ENCODE measurements at regions of chr2 and their contacts with region 1.

Region 1: DNA sequence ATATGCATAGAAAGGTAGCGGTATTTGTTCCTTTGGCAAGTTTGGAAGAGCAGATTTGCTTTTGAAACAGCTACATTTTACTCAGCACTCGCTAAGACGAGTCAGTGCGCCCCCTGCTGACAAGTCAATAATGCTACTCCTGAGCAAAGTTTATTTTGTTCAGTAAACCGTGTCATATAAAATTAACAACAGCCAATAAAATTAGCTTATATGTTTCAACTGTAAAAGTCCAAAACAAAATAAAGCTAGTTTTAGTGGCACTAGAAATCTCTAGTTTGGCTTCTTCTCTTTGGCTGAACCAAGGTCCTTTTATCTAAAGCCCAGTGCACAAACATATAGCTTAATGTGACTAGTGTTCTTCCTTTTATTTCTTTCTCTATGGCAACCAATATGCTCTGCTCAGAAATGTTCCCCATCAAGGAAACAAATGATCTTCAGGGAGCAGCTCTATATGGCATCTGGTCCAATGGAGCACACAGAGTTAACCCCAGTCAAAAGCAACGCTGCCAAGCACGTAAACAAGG is 4.2 kb upstream of the POU3F3 start:
- DNase-seq: peak; percentile 88
- ATAC-seq: peak; percentile 34
- H3K4me3 Mint-ChIP-seq: no peak overlapping the region
- H3K27ac Mint-ChIP-seq: no peak overlapping the region
- H3K4me1 Mint-ChIP-seq: peaks cover 30% of the 10 kb centered on the region
- H3K27me3 Mint-ChIP-seq: peaks cover 83% of the 10 kb centered on the region

Region 2: GRCh38 chr2:104434318-104434797 is 415.3 kb before region 1 on chr2:
- CTCF ChIA-PET with region 1: no interaction called
- POLR2A ChIA-PET with region 1: no interaction called
- intact Hi-C with region 1: loop called in 1 of 2 experiments (anchors 10 kb)
- DNase-seq: peak; percentile 37
- ATAC-seq: peak; percentile 85
- H3K4me3 Mint-ChIP-seq: peak overlapping the region; percentile 16
- H3K27ac Mint-ChIP-seq: no peak overlapping the region
- H3K4me1 Mint-ChIP-seq: peaks cover 7% of the 10 kb centered on the region
- H3K27me3 Mint-ChIP-seq: peaks cover 26% of the 10 kb centered on the region

Region 3: GRCh38 chr2:104447831-104448434 is 401.7 kb before region 1 on chr2:
- CTCF ChIA-PET with region 1: no interaction called
- POLR2A ChIA-PET with region 1: no interaction called
- intact Hi-C with region 1: loop called in 1 of 2 experiments (anchors 10 kb)
- DNase-seq: no peak
- ATAC-seq: no peak
- H3K4me3 Mint-ChIP-seq: no peak overlapping the region
- H3K27ac Mint-ChIP-seq: no peak overlapping the region
- H3K4me1 Mint-ChIP-seq: peaks cover 3% of the 10 kb centered on the region
- H3K27me3 Mint-ChIP-seq: no peaks in the 10 kb centered on the region

Region 4: GRCh38 chr2:104862058-104862941 is 12.6 kb after region 1 on chr2:
- CTCF ChIA-PET with region 1: interaction called, 22 read pairs
- POLR2A ChIA-PET with region 1: no interaction called
- intact Hi-C with region 1: loop called in 1 of 2 experiments (anchors 2 kb)
- DNase-seq: no peak
- ATAC-seq: no peak
- H3K4me3 Mint-ChIP-seq: peak overlapping the region; percentile 10
- H3K27ac Mint-ChIP-seq: no peak overlapping the region
- H3K4me1 Mint-ChIP-seq: peaks cover 9% of the 10 kb centered on the region
- H3K27me3 Mint-ChIP-seq: peaks cover 79% of the 10 kb centered on the region

Region 5: GRCh38 chr2:104872866-104873688 is 23.4 kb after region 1 on chr2:
- CTCF ChIA-PET with region 1: interaction called, 20 read pairs
- POLR2A ChIA-PET with region 1: no interaction called
- intact Hi-C with region 1: loop called (anchors 1 to 2 kb)
- DNase-seq: peak; percentile 79
- ATAC-seq: peak; percentile 88
- H3K4me3 Mint-ChIP-seq: peak overlapping the region; percentile 51
- H3K27ac Mint-ChIP-seq: no peak overlapping the region
- H3K4me1 Mint-ChIP-seq: peaks cover 12% of the 10 kb centered on the region
- H3K27me3 Mint-ChIP-seq: peaks cover 56% of the 10 kb centered on the region

Region 6: DNA sequence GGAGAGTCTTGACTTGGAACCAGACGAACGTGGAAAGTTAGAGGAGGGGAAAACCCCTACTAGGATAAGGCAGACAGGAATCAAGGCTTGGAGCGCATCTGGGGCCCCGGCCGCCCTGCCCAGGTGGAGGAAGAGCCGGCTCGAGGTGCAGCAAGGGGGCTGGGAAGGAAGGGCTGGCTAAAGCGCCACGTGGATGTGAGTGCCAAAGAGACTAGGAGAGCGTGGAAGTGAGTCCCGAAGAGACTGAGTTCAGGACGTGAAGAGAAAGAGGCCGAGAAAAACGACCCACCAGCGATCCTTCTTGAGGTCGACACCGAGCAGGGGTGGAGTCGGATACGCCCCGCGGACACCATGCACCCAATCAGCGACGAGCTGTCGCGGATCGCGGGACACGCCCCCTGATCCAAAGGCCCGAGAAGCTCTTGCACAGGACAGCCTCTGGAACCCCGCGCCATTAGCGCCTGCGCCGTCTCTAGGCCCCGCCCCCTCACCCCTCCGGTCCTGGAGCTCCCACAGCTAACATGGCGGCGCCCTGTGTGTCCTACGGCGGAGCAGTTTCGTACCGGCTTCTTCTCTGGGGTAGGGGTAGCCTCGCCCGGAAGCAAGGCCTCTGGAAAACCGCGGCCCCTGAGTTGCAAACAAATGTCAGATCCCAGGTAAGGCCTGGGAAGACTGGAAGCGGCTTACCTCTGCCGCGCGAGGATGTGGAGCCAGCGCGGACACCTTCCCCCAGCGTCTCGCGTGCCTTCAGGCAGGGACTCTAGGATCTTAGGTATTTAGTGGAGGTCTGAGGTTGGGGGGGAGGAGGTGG is 188.1 kb after region 1 on chr2 and contains the start of gene MRPS9:
- CTCF ChIA-PET with region 1: no interaction called
- POLR2A ChIA-PET with region 1: no interaction called
- intact Hi-C with region 1: loop called in 1 of 2 experiments (anchors 2 kb)
- DNase-seq: peak; percentile 99
- ATAC-seq: peak; percentile 99
- H3K4me3 Mint-ChIP-seq: peak within 1 kb of the TSS; percentile 86
- H3K27ac Mint-ChIP-seq: peak within 1 kb of the TSS; percentile 94
- H3K4me1 Mint-ChIP-seq: peaks cover 28% of the 10 kb centered on the region
- H3K27me3 Mint-ChIP-seq: no peaks in the 10 kb centered on the region
- total RNA-seq, gene MRPS9: 41.0 to 46.0 TPM

Region 7: GRCh38 chr2:105235388-105236054 is 385.8 kb after region 1 on chr2:
- CTCF ChIA-PET with region 1: interaction called, 3 read pairs
- POLR2A ChIA-PET with region 1: no interaction called
- intact Hi-C with region 1: loop called in 1 of 2 experiments (anchors 5 kb)
- DNase-seq: peak; percentile 85
- ATAC-seq: peak; percentile 77
- H3K4me3 Mint-ChIP-seq: no peak overlapping the region
- H3K27ac Mint-ChIP-seq: no peak overlapping the region
- H3K4me1 Mint-ChIP-seq: peaks cover 6% of the 10 kb centered on the region
- H3K27me3 Mint-ChIP-seq: no peaks in the 10 kb centered on the region